PC-3 (cell line): ENCODE measurements at regions of chr1 and their contacts with region 1.

Region 1: DNA sequence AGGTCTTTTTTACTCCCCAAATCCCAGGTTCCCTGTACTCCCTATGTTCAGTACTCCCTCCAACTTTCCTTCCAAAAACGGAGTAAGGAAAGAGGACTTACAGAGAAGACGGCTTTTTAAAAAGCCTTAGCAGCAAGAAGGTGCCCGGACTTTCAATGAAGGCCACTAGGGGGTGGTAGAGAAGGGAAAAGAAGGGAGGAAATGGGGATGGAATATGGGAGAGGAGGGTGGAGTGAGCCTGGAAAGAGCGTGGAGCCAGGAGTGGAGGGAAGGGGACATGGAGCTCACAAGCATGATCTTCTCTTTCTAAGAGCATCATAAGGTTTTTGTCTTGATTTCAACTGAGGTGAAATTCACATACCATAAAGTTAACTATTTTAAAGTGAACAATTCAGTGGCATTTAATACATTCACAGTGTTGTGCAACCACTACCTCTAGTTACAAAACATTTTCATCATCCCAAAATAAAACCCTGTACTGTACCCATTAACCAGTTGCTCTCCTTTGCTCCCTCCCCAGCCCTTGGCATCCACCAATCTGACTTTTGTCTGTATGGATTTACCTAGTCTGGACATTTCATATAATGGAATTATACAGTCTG is 129.9 kb downstream of the ZNF281 start:
- DNase-seq: peak; percentile 99
- ATAC-seq: peak; percentile 88
- H3K4me3 ChIP-seq: no peak overlapping the region
- H3K27ac ChIP-seq: no peak overlapping the region
- H3K4me1 ChIP-seq: no peaks in the 10 kb centered on the region
- H3K27me3 ChIP-seq: no peaks in the 10 kb centered on the region
- CTCF ChIP-seq: peak; percentile 97

Region 2: DNA sequence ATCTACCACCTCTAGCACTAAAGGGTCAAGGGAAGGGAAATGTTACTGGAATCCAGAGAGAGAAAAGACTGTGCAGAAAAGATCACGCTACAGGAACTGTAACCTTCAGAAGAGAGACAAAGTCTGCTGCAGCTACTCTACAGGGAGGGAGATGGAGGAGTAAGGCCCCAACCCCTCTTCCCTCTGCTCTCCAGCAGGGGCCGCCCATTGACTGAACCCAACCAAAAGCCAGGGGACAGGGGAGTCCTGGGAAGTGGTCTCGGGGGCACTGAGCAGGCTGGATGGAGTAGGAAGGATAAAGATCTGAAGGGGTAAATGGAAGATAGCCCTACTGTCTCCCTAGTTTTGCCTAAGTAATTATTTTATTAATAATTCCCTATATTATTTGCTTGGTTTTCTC is 325.2 kb before region 1 on chr1:
- CTCF ChIA-PET with region 1: interaction called, 4 read pairs
- POLR2A ChIA-PET with region 1: no interaction called
- intact Hi-C with region 1: loop called (anchors 1 kb)
- DNase-seq: peak; percentile 67
- ATAC-seq: peak; percentile 87
- H3K4me3 ChIP-seq: no peak overlapping the region
- H3K27ac ChIP-seq: no peak overlapping the region
- H3K4me1 ChIP-seq: no peaks in the 10 kb centered on the region
- H3K27me3 ChIP-seq: no peaks in the 10 kb centered on the region
- CTCF ChIP-seq: peak; percentile 97

Region 3: DNA sequence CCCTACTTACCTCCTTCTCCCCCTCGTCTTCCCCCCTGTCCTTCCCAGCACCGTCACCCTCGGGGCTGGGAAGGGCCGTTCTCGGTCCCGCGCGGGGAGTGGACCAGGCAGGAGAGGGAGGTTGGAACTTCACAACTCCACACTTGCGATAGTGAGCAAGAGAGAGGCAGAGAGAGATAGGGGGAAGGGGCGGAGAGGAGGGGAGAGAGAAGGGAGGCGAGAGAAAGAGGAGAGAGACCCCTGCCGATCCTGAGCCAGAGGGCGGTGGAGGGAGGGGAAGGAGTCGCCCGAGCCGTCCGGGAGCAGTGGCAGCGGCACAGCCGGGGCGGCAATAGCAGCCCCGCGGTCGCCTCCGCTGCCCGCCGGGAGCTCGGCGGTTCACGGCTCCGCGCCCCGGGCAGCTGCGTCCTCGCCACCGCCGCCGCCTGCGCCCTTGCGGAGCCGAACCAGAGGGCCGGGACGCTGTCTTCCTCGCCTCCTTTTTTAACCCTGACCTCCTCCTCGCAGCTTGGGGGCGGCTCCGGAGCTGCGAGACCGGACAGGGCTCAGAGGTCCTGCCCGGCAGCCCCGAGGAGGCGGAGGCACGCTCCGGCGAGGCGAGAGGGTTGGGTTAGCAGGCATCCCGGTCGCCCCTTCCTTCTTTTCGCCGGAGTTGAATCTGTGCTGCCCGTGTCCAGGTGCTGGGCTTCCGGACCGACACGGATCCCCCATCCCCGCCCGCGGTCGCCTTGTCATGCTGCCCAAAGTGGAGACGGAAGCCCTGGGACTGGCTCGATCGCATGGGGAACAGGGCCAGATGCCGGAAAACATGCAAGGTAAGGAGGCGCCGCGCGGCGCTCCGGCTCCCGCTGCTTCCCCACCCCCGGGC is 240.7 kb before region 1 on chr1:
- CTCF ChIA-PET with region 1: no interaction called
- POLR2A ChIA-PET with region 1: no interaction called
- intact Hi-C with region 1: loop called (anchors 5 kb)
- DNase-seq: peak; percentile 71
- ATAC-seq: peak; percentile 84
- H3K4me3 ChIP-seq: peak overlapping the region; percentile 70
- H3K27ac ChIP-seq: no peak overlapping the region
- H3K4me1 ChIP-seq: peaks cover 7% of the 10 kb centered on the region; the same call in 1 of the 2 replicates
- H3K27me3 ChIP-seq: peaks cover 79% of the 10 kb centered on the region
- CTCF ChIP-seq: no peak; the same call in 1 of the 2 replicates

Region 4: DNA sequence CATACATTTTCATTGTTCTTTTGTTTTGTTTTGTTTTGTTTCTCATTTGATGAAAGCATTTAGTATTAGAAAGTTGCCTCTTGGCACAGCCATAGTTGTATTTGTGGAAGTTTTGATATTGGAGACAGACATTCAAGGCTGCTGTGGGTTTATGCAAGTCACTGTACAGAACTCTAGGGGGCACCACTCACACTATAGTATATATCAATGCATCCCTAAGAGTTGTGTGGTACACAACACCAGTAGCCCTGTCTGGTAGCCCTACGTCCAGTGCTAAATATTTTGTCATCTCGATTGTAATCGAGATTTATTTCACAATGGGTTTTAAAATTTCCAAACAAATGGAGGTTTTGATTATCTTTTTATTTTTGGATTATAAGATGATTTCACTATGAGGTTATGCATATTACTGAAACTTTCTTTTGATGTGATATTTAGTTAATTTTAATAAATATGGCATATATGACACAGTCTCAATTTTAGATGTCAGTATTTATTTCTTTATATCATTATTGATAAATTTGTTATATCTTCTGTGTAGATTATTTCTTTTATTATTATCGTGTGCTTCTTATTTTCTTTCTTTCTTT is 140.2 kb before region 1 on chr1:
- CTCF ChIA-PET with region 1: interaction called, 9 read pairs
- POLR2A ChIA-PET with region 1: no interaction called
- intact Hi-C with region 1: loop called (anchors 1 kb)
- DNase-seq: peak; percentile 93
- ATAC-seq: peak; percentile 100
- H3K4me3 ChIP-seq: no peak overlapping the region
- H3K27ac ChIP-seq: no peak overlapping the region
- H3K4me1 ChIP-seq: no peaks in the 10 kb centered on the region
- H3K27me3 ChIP-seq: no peaks in the 10 kb centered on the region
- CTCF ChIP-seq: peak; percentile 100

Region 5: GRCh38 chr1:200253774-200254495 is 26.0 kb before region 1 on chr1:
- CTCF ChIA-PET with region 1: no interaction called
- POLR2A ChIA-PET with region 1: no interaction called
- intact Hi-C with region 1: no loop called
- DNase-seq: no peak
- ATAC-seq: no peak; the same call in 1 of the 2 replicates
- H3K4me3 ChIP-seq: no peak overlapping the region
- H3K27ac ChIP-seq: no peak overlapping the region
- H3K4me1 ChIP-seq: no peaks in the 10 kb centered on the region
- H3K27me3 ChIP-seq: no peaks in the 10 kb centered on the region
- CTCF ChIP-seq: 0 out of 2 replicates have a peak, but pooled peaks have one; percentile 12